ENCODE measurements at regions of chr17 and their contacts with region 1.

Region 1: DNA sequence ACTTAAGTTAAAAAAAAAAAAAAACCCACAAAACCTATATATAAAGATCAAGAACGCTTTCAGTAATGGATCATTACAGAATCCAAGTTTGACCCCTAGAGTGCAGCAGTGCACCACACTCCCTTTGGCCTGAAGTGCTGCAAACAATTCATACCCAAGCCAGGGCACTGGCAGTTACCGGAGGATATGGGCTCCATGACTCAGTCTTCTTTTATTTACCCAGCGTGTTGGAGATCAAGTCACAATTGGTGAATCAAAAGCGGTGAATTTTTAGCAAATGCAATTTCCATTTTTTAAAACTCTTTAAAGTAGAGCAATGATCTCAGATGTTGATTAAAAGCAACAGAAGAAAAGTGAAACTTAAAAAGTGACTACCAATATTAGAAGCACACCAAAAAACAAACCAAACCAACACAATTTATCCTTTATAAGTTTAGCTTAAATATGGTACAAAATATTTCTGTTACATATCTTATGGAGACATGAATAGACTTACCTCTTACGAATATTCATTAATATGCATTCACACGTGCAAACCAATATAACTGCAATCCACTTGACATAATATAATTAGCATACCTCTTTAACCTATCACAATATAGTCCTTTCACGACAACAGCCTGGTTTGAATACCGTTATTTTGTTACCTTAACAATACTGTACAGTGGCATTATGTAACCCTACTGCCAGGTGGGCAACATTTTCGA is 46.3 kb downstream of the ZNF652 start:
- DNase-seq: peak; percentile 66
- ATAC-seq: peak; percentile 98
- H3K4me3 ChIP-seq: peak overlapping the region; percentile 26; the same call in 1 of the 2 replicates
- H3K27ac ChIP-seq: peak overlapping the region; percentile 53
- H3K4me1 ChIP-seq: peaks cover 16% of the 10 kb centered on the region
- H3K27me3 ChIP-seq: no peaks in the 10 kb centered on the region
- CTCF ChIP-seq: peak; percentile 70 to 97 (median 81)
- EP300 ChIP-seq: no peak
- POLR2A ChIP-seq: no peak
- RAD21 ChIP-seq: peak; percentile 100

Region 2: DNA sequence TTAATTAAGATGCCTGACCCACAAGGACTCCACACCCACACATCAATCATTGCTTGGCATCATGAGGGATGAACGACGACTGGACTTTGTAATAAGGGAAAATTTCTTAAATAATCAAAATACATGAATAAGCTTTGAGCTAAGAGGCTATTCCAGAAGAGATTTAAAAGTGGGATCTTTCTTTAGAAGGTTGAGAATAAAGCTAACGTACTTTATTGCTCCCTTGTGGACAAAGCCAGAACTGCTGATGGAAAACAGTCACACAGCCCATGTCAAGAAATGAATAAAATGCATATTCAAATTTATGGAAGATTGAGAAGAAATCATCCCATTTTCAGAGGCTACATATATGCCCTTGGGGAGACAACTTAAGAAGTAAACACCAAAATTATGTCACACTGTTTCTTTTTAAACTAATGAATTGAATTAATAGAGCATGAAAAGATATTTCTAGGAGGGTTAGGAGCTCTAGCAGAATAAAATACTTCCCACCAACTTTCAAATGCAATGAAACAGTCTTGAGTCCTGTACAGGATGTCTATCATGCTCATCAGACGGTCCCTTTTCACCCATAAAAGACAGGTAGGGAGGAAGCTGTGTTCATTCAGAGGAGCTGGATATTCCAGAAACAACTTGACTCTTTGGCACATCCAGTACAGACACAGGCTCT is 24.9 kb before region 1 on chr17:
- CTCF ChIA-PET with region 1: interaction called, 10 read pairs
- POLR2A ChIA-PET with region 1: no interaction called
- RAD21 ChIA-PET with region 1: interaction called, 4 read pairs
- SMC1A ChIA-PET with region 1: interaction called, 3 read pairs
- in situ Hi-C with region 1: no loop called
- intact Hi-C with region 1: no loop called
- DNase-seq: no peak
- ATAC-seq: peak; percentile 41; the same call in 1 of the 3 replicates
- H3K4me3 ChIP-seq: no peak overlapping the region
- H3K27ac ChIP-seq: no peak overlapping the region
- H3K4me1 ChIP-seq: no peaks in the 10 kb centered on the region
- H3K27me3 ChIP-seq: no peaks in the 10 kb centered on the region
- CTCF ChIP-seq: peak; percentile 48 to 62 (median 56); a peak in 4 of 6 replicates
- EP300 ChIP-seq: no peak
- POLR2A ChIP-seq: no peak
- RAD21 ChIP-seq: peak; percentile 56

Region 3: DNA sequence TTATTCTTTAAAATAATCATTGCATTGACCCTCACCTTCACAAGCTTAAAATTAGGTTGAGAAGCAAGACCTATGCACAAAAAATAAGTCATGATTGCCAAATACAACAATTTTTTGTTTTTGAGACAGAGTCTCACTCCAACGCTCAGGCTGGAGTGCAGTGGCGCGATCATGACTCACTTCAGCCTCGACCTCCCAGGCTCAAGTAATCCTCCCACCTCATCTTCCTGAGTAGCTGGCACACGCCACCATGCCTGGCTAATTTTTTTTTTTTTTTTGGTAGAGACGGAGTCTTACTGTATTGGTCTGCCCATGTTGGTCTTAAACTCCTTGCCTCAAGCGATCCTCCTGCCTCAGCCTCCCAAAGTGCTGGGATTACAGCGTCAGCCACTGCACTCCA is 22.2 kb after region 1 on chr17:
- CTCF ChIA-PET with region 1: interaction called, 36 read pairs
- POLR2A ChIA-PET with region 1: no interaction called
- RAD21 ChIA-PET with region 1: interaction called, 21 read pairs
- SMC1A ChIA-PET with region 1: interaction called, 13 read pairs
- in situ Hi-C with region 1: no loop called
- intact Hi-C with region 1: no loop called
- DNase-seq: no peak
- ATAC-seq: no peak
- H3K4me3 ChIP-seq: no peak overlapping the region
- H3K27ac ChIP-seq: no peak overlapping the region
- H3K4me1 ChIP-seq: peaks cover 16% of the 10 kb centered on the region
- H3K27me3 ChIP-seq: no peaks in the 10 kb centered on the region
- CTCF ChIP-seq: no peak
- EP300 ChIP-seq: no peak
- POLR2A ChIP-seq: no peak
- RAD21 ChIP-seq: no peak

Region 4: GRCh38 chr17:49361902-49362722 is 46.4 kb after region 1 on chr17 and contains the start of gene ZNF652:
- CTCF ChIA-PET with region 1: interaction called, 330 read pairs
- POLR2A ChIA-PET with region 1: interaction called, 3 read pairs
- RAD21 ChIA-PET with region 1: interaction called, 115 read pairs
- SMC1A ChIA-PET with region 1: interaction called, 140 read pairs
- in situ Hi-C with region 1: loop called (anchors 5 kb)
- intact Hi-C with region 1: no loop called
- DNase-seq: peak; percentile 65
- ATAC-seq: peak; percentile 69
- H3K4me3 ChIP-seq: peak within 1 kb of the TSS; percentile 95
- H3K27ac ChIP-seq: peak within 1 kb of the TSS; percentile 81
- H3K4me1 ChIP-seq: peaks cover 20% of the 10 kb centered on the region
- H3K27me3 ChIP-seq: no peaks in the 10 kb centered on the region
- CTCF ChIP-seq: no peak
- EP300 ChIP-seq: no peak
- POLR2A ChIP-seq: peak; percentile 71
- RAD21 ChIP-seq: no peak
- polyA plus RNA-seq, gene ZNF652: 3.5 to 5.4 TPM

Region 5: DNA sequence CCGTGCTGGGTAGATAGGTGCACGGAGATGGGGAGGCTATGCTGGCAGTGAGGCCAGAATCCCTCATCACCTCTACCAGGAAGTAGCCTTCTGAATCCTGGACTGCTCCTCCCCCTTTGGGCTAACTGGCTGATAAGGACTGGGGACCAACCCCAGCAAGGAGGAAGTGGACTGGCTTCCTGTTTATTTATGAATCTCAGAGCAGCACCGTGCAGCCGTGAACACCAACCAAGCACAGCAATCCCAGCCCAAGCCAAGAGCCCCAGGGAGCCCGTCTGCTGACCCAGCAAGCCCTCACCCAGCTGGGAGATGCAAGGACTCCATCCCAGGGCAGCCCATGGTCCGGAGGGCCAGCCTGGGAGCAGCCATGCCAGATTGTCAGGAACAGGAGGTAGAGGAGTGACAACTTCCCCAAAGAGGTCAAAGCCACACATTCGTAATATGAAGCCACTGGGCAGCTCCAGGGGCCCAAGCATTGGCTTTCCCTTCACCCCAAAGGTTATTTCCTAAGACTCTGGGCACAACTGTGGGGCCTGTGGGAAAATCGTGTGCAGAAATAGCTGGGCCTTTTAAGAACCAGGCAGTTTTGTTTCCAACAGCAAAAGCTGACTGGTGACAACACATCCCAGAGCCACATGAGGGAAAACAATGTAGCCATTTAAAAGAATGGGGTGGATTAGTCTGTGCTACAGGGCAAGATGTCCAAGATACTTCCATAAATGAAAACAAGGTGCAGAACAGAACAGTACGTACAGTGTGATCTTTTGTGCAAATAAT is 75.0 kb after region 1 on chr17:
- CTCF ChIA-PET with region 1: interaction called, 71 read pairs
- POLR2A ChIA-PET with region 1: interaction called, 4 read pairs
- RAD21 ChIA-PET with region 1: interaction called, 12 read pairs
- SMC1A ChIA-PET with region 1: interaction called, 85 read pairs
- in situ Hi-C with region 1: no loop called
- intact Hi-C with region 1: loop called (anchors 1 kb)
- DNase-seq: no peak
- ATAC-seq: peak; percentile 59
- H3K4me3 ChIP-seq: peak overlapping the region; percentile 42; the same call in 1 of the 2 replicates
- H3K27ac ChIP-seq: peak overlapping the region; percentile 64
- H3K4me1 ChIP-seq: peaks cover 39% of the 10 kb centered on the region
- H3K27me3 ChIP-seq: no peaks in the 10 kb centered on the region
- CTCF ChIP-seq: no peak
- EP300 ChIP-seq: no peak
- POLR2A ChIP-seq: no peak
- RAD21 ChIP-seq: no peak

Region 6: GRCh38 chr17:49407981-49408501 is 92.3 kb after region 1 on chr17:
- CTCF ChIA-PET with region 1: interaction called, 13 read pairs
- POLR2A ChIA-PET with region 1: no interaction called
- RAD21 ChIA-PET with region 1: interaction called, 3 read pairs
- SMC1A ChIA-PET with region 1: interaction called, 4 read pairs
- in situ Hi-C with region 1: no loop called
- intact Hi-C with region 1: no loop called
- DNase-seq: no peak
- ATAC-seq: peak; percentile 100
- H3K4me3 ChIP-seq: no peak overlapping the region
- H3K27ac ChIP-seq: no peak overlapping the region
- H3K4me1 ChIP-seq: peaks cover 10% of the 10 kb centered on the region
- H3K27me3 ChIP-seq: no peaks in the 10 kb centered on the region
- CTCF ChIP-seq: peak; percentile 96 to 99 (median 98)
- EP300 ChIP-seq: no peak
- POLR2A ChIP-seq: no peak
- RAD21 ChIP-seq: peak; percentile 80